ENCODE measurements at regions of chrX and their contacts with region 1.

Region 1: GRCh38 chrX:73855546-73855945 is 292.5 kb downstream of the CHIC1 start:
- DNase-seq: peak; percentile 50 to 96 (median 68)

Region 2: GRCh38 chrX:73930300-73930699 is 74.8 kb after region 1 on chrX:
- intact Hi-C with region 1: no loop called
- DNase-seq: no peak

Region 3: GRCh38 chrX:73977534-73978169 is 122.1 kb after region 1 on chrX:
- intact Hi-C with region 1: no loop called
- DNase-seq: no peak

Region 4: GRCh38 chrX:74015379-74016019 is 160.0 kb after region 1 on chrX:
- intact Hi-C with region 1: loop called (anchors 1 kb)
- DNase-seq: peak in 6 of 10 donors; percentile 12 to 92 (median 44)

Region 5: GRCh38 chrX:74079116-74079515 is 223.6 kb after region 1 on chrX:
- intact Hi-C with region 1: no loop called
- DNase-seq: no peak

Region 6: GRCh38 chrX:74133156-74133796 is 277.7 kb after region 1 on chrX:
- intact Hi-C with region 1: loop called (anchors 1 kb)
- DNase-seq: no peak

Region 7: GRCh38 chrX:74343343-74344279 is 488.1 kb after region 1 on chrX:
- intact Hi-C with region 1: loop called (anchors 2 kb)
- DNase-seq: peak in 1 of 10 donors; percentile 33

Region 8: GRCh38 chrX:74382613-74383012 is 527.1 kb after region 1 on chrX:
- intact Hi-C with region 1: loop called (anchors 2 kb)
- DNase-seq: peak in 7 of 10 donors; percentile 44 to 86 (median 61)

Region 9: DNA sequence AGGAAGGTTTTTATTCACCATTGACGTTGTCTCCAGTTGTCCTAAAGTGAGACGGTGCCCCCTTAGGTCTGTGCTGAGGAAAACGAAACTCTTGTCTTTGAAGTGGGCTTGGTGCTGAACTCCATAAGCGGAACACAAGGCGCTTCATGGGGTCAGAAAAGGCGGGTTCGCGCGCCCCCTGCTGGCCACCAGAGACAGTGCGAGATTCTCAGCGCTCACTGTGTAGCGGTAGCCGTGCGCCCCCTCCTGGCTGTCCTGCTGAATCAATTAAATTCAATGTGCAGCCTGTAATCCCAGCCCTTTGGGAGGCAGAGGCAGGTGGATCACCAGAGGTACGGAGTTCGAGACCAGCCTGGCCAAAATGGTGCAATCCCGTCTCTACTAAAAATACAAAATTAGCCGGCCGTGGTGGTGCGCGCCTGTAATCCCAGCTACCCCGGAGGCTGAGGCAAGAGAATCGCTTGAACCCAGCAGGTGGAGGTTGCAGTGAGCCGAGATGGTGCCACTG is 694.8 kb after region 1 on chrX:
- intact Hi-C with region 1: loop called (anchors 5 kb)
- DNase-seq: peak; percentile 54 to 97 (median 81)

Measured in posterior cingulate gyrus (tissue), 11 donors.